ENCODE measurements at regions of chr16 and their contacts with region 1.

Region 1: DNA sequence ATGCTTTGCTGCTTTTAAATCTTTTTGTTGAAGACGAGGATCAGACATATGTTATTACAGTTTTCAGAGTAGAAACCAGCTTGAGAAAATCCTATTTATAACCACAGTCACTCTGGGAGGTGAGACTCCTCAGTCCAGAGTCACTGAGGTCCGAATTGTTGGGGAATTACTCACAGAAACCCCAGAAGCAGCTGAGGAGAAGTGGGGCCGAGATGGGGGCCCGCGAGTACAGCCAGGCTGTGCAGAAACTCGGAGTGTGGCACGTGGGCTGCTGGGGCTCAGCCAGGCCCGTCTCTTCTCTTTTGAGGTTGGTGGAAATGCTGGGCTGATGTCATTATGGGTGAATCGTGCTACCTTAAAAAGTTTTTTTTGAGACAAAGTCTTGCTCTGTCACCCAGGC is 14.4 kb upstream of the GNG13 start:
- DNase-seq: no peak
- ATAC-seq: no peak
- H3K4me3 ChIP-seq: no peak overlapping the region
- H3K27ac ChIP-seq: no peak overlapping the region
- H3K4me1 ChIP-seq: peaks cover 7 to 9% of the 10 kb centered on the region in 2 donors
- H3K27me3 ChIP-seq: peaks cover 19 to 97% of the 10 kb centered on the region in 2 donors
- CTCF ChIP-seq: no peak

Region 2: DNA sequence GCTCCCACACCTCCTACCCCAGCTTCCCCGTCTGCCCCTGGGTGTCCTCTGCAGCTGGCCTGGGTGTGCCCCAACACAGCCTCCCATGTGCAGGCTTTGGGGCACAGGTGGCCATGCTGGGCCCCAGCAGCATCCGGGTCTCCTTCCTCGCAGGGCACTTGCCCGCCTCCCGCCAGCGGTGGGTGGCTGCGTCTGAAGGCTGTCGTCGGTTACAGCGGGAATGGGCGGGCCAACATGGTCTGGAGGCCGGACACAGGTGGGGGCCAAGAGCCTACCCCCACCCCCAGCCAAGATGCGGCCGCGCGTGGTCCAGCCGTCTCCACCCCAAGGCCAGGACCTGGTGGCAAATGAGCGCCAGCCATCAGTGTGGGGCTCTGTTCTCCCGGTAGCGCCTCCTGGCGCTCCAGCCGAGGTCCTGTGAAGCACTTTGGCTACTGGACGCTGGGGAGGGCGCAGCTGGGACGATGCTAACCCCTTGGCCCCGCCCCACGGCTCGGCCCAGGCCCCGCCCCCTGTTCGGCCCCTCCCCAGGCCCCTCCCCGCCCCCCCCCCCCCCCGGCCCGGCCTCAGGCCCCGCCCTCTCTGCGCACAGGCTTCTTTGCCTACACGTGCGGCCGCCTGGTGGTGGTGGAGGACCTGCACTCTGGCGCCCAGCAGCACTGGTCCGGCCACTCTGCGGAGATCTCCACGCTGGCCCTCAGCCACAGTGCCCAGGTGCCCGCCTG is 154.4 kb before region 1 on chr16:
- intact Hi-C with region 1: no loop called
- DNase-seq: peak in 3 of 4 donors; percentile 74 to 95 (median 91)
- ATAC-seq: peak; percentile 94
- H3K4me3 ChIP-seq: peak overlapping the region in 1 of 2 donors; percentile 26
- H3K27ac ChIP-seq: peak overlapping the region; percentile 44 to 58
- H3K4me1 ChIP-seq: peaks cover 3 to 17% of the 10 kb centered on the region in 2 donors
- H3K27me3 ChIP-seq: no peaks in the 10 kb centered on the region
- CTCF ChIP-seq: peak; percentile 31 to 76

Region 3: GRCh38 chr16:855471-855870 is 40.5 kb after region 1 on chr16:
- intact Hi-C with region 1: no loop called
- DNase-seq: peak in 1 of 4 donors; percentile 55
- ATAC-seq: no peak
- H3K4me3 ChIP-seq: no peak overlapping the region
- H3K27ac ChIP-seq: no peak overlapping the region
- H3K4me1 ChIP-seq: no peaks in the 10 kb centered on the region
- H3K27me3 ChIP-seq: no peaks in the 10 kb centered on the region
- CTCF ChIP-seq: no peak

Region 4: DNA sequence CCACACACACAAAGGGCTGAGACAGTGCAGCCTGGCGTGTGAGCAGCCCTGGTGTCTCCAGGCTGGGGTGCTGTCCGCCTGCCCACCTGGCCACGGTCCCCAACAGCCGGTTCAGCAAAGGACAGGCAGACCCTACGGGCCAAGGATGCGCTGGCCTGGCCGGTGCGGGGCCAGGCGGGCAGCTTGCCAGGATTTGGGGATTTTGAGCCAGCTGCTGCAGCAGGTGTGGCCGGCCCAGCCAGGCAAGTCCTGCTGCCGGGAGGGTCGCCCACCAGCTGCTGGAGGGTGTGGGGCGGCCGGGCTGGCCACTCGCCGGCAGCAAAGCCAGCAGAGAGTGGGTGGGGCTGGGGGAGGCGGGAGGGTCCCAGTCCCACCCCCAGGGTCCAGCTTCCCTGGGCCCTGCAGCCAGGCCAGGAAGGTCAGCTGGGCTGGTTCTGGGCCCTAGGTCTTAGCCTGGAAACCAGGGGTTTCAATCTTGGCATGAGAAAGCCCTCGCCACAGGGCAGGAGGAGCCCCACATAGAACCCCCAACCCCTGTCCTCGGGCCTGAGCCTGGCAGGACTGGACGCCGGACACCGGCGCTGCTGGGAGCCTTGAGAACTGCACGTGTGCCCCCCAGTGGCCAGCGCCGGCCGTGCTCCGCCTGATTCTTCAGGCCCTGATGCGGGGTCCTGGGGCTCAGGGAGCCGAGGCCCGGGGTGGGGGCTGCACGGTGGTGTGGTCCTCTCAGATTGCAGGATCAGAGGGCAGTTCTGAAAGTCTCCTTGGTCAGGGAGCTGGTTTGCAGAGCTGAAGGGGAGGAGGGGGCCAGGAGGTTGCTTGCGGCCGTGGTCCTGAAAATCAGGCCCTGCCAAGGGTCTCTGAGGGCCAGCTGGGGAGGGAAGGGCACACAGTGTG is 239.9 kb after region 1 on chr16:
- intact Hi-C with region 1: loop called in 1 of 2 experiments (anchors 5 kb)
- DNase-seq: peak in 2 of 4 donors; percentile 43 to 63
- ATAC-seq: peak; percentile 85
- H3K4me3 ChIP-seq: no peak overlapping the region
- H3K27ac ChIP-seq: no peak overlapping the region
- H3K4me1 ChIP-seq: no peaks in the 10 kb centered on the region
- H3K27me3 ChIP-seq: peaks cover 0 to 88% of the 10 kb centered on the region in 2 donors
- CTCF ChIP-seq: peak; percentile 55 to 66

Region 5: GRCh38 chr16:1133810-1134520 is 319.0 kb after region 1 on chr16:
- intact Hi-C with region 1: no loop called
- DNase-seq: no peak
- ATAC-seq: no peak
- H3K4me3 ChIP-seq: no peak overlapping the region
- H3K27ac ChIP-seq: no peak overlapping the region
- H3K4me1 ChIP-seq: no peaks in the 10 kb centered on the region
- H3K27me3 ChIP-seq: peaks cover 0 to 69% of the 10 kb centered on the region in 2 donors
- CTCF ChIP-seq: no peak

Measured in left lung (tissue), 14 donors.